ENCODE measurements at regions of chr14 and their contacts with region 1.

Region 1: DNA sequence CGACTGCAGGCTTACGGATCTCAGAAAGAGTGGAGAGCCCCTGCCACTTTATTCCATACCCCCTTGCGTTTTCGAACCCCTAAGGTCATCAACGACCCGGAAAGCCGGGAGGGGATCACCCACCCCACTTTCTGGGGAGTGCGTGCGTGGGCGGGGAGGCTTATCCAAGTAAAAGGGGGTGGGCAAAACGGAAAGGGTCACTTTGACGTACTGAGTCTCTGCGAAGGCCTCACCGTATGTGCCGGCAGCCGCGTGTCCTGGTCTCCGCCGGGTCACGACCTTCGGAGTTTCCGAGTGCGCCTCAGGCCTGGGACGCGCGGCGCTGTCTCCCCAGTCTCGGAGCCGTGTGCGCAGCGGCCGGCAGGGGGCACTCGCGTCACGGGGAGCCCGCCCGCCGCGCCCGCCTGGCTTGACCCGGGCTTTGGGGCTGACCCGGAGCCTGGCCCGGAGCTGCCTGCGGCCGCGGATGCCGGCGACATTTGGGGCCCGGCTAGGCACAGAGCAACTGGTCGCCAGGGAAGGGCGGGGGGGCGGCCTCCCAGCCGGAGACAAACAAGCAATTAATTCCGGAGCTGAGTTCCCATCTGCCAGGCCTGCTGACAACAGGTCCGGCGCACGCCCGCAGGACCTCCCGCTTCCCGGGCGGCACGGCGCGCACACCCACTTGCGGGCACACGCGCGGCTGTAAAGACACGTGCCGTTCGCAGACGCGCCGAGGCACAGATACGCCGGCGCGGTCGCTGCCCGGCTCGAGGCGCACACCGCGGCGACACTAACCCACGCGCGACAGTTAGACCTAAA is 890 bp upstream of the KIF26A start:
- DNase-seq: peak; percentile 52
- H3K4me3 Mint-ChIP-seq: peak overlapping the region; percentile 33
- H3K27ac Mint-ChIP-seq: no peak overlapping the region
- H3K4me1 Mint-ChIP-seq: no peaks in the 10 kb centered on the region
- H3K27me3 Mint-ChIP-seq: peaks cover 27% of the 10 kb centered on the region

Region 2: GRCh38 chr14:104563742-104564615 is 426.5 kb after region 1 on chr14:
- intact Hi-C with region 1: loop called (anchors 5 kb)
- DNase-seq: peak; percentile 41
- H3K4me3 Mint-ChIP-seq: no peak overlapping the region
- H3K27ac Mint-ChIP-seq: no peak overlapping the region
- H3K4me1 Mint-ChIP-seq: no peaks in the 10 kb centered on the region
- H3K27me3 Mint-ChIP-seq: no peaks in the 10 kb centered on the region